PC-3 (cell line): ENCODE measurements at regions of chr14 and their contacts with region 1.

Region 1: GRCh38 chr14:66495218-66496098 is 9.3 kb downstream of the CCDC196 start:
- DNase-seq: peak; percentile 70
- ATAC-seq: peak; percentile 99
- H3K4me3 ChIP-seq: peak overlapping the region; percentile 16; the same call in 1 of the 2 replicates
- H3K27ac ChIP-seq: no peak overlapping the region
- H3K4me1 ChIP-seq: no peaks in the 10 kb centered on the region
- H3K27me3 ChIP-seq: no peaks in the 10 kb centered on the region
- CTCF ChIP-seq: peak; percentile 90

Region 2: DNA sequence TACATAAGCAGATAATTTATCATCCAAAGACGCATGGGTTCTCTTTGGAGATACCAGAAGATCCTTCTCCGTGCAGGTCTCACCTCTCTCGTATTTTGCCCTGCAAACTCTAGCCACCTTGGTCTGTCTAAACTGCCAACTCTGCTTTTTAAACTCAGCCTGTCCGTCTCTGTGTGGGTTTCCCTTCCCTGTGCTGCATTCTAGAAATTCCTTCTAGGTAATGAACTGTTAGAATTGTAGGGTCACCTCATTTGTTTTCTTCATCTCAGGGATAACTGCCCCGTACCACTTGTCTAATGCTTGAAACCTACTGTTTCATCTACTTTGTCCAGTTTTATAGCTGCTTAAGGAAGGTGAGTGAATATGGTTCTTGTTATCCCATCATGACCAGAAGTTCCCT is 54.7 kb before region 1 on chr14:
- CTCF ChIA-PET with region 1: no interaction called
- POLR2A ChIA-PET with region 1: no interaction called
- intact Hi-C with region 1: no loop called
- DNase-seq: no peak
- ATAC-seq: no peak
- H3K4me3 ChIP-seq: no peak overlapping the region
- H3K27ac ChIP-seq: no peak overlapping the region
- H3K4me1 ChIP-seq: 0 out of 2 replicates have a peak, but pooled peaks cover 3% of the 10 kb centered on the region
- H3K27me3 ChIP-seq: no peaks in the 10 kb centered on the region
- CTCF ChIP-seq: no peak

Region 3: DNA sequence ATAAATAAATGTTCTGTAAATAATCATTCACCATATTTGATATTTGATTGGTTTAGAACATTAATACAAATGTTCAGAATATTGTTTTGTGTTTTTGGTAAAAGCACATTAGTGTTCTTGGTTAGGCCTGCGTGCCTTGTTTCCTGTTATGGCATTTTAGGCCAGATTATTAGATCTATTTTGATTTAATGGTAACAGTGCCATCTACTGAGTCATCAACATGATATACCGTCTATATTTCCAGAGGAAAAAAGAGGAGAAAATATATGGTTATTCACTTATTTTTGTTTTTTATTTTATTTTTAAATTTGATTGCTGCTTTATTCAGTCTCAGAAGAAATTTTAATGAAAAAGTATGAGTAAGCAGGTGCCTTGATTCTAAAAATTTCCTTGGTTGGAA is 72.8 kb after region 1 on chr14:
- CTCF ChIA-PET with region 1: no interaction called
- POLR2A ChIA-PET with region 1: no interaction called
- intact Hi-C with region 1: loop called (anchors 1 kb)
- DNase-seq: no peak
- ATAC-seq: peak; percentile 37
- H3K4me3 ChIP-seq: no peak overlapping the region
- H3K27ac ChIP-seq: no peak overlapping the region
- H3K4me1 ChIP-seq: peaks cover 3% of the 10 kb centered on the region; the same call in 1 of the 2 replicates
- H3K27me3 ChIP-seq: no peaks in the 10 kb centered on the region
- CTCF ChIP-seq: 0 out of 2 replicates have a peak, but pooled peaks have one; percentile 26

Region 4: GRCh38 chr14:66649498-66649897 is 154.0 kb after region 1 on chr14:
- CTCF ChIA-PET with region 1: no interaction called
- POLR2A ChIA-PET with region 1: no interaction called
- intact Hi-C with region 1: no loop called
- DNase-seq: no peak
- ATAC-seq: no peak
- H3K4me3 ChIP-seq: no peak overlapping the region
- H3K27ac ChIP-seq: no peak overlapping the region
- H3K4me1 ChIP-seq: peaks cover 8% of the 10 kb centered on the region; the same call in 1 of the 2 replicates
- H3K27me3 ChIP-seq: no peaks in the 10 kb centered on the region
- CTCF ChIP-seq: no peak

Region 5: DNA sequence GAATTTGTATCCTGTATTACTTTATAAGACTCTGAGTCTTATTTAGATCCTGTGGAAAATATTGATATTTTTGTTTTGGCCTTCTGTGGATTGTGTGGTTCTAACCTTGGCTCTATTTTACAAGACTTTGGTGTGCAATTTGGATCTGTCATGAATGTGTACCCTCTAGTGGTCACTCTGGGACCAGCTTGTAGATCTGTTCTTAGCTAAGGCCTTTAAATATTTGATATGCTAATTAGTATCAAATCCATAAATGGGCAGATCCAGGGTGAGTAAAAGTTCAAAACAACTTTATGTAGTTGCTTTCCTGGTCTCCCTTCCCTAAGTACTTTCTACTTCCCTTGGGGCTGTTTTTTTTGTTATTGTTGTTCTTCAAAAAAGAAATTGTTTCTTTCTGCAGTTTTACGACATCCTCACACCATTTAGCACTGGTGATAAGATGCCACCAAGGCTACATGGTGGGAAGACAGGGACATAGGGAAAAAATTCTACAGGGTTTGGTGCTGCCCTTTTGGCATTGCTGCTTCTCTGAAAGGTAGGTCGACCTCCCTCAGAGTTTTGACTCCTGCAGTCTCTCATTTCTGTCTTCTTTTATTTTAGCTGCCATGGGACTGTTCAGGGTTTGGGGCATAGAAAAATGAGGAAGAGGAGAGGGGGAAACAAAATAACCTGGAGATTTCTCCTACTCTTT is 251.0 kb after region 1 on chr14:
- CTCF ChIA-PET with region 1: no interaction called
- POLR2A ChIA-PET with region 1: no interaction called
- intact Hi-C with region 1: loop called (anchors 5 kb)
- DNase-seq: peak; percentile 71
- ATAC-seq: peak; percentile 95
- H3K4me3 ChIP-seq: no peak overlapping the region
- H3K27ac ChIP-seq: no peak overlapping the region
- H3K4me1 ChIP-seq: no peaks in the 10 kb centered on the region
- H3K27me3 ChIP-seq: no peaks in the 10 kb centered on the region
- CTCF ChIP-seq: peak; percentile 90

Region 6: GRCh38 chr14:66842911-66843512 is 347.6 kb after region 1 on chr14:
- CTCF ChIA-PET with region 1: no interaction called
- POLR2A ChIA-PET with region 1: no interaction called
- intact Hi-C with region 1: no loop called
- DNase-seq: no peak
- ATAC-seq: no peak
- H3K4me3 ChIP-seq: no peak overlapping the region
- H3K27ac ChIP-seq: no peak overlapping the region
- H3K4me1 ChIP-seq: no peaks in the 10 kb centered on the region
- H3K27me3 ChIP-seq: no peaks in the 10 kb centered on the region
- CTCF ChIP-seq: no peak

Region 7: GRCh38 chr14:66859063-66859671 is 363.7 kb after region 1 on chr14:
- CTCF ChIA-PET with region 1: no interaction called
- POLR2A ChIA-PET with region 1: no interaction called
- intact Hi-C with region 1: no loop called
- DNase-seq: no peak
- ATAC-seq: no peak
- H3K4me3 ChIP-seq: no peak overlapping the region
- H3K27ac ChIP-seq: no peak overlapping the region
- H3K4me1 ChIP-seq: no peaks in the 10 kb centered on the region
- H3K27me3 ChIP-seq: no peaks in the 10 kb centered on the region
- CTCF ChIP-seq: no peak

Region 8: GRCh38 chr14:67137744-67138371 is 642.4 kb after region 1 on chr14:
- CTCF ChIA-PET with region 1: no interaction called
- POLR2A ChIA-PET with region 1: no interaction called
- intact Hi-C with region 1: loop called (anchors 5 kb)
- DNase-seq: peak; percentile 53
- ATAC-seq: peak; percentile 65; the same call in 1 of the 2 replicates
- H3K4me3 ChIP-seq: no peak overlapping the region
- H3K27ac ChIP-seq: no peak overlapping the region
- H3K4me1 ChIP-seq: no peaks in the 10 kb centered on the region
- H3K27me3 ChIP-seq: no peaks in the 10 kb centered on the region
- CTCF ChIP-seq: peak; percentile 64